CD8-positive, alpha-beta T cell (primary cell): ENCODE measurements at regions of chr4 and their contacts with region 1.

Region 1: DNA sequence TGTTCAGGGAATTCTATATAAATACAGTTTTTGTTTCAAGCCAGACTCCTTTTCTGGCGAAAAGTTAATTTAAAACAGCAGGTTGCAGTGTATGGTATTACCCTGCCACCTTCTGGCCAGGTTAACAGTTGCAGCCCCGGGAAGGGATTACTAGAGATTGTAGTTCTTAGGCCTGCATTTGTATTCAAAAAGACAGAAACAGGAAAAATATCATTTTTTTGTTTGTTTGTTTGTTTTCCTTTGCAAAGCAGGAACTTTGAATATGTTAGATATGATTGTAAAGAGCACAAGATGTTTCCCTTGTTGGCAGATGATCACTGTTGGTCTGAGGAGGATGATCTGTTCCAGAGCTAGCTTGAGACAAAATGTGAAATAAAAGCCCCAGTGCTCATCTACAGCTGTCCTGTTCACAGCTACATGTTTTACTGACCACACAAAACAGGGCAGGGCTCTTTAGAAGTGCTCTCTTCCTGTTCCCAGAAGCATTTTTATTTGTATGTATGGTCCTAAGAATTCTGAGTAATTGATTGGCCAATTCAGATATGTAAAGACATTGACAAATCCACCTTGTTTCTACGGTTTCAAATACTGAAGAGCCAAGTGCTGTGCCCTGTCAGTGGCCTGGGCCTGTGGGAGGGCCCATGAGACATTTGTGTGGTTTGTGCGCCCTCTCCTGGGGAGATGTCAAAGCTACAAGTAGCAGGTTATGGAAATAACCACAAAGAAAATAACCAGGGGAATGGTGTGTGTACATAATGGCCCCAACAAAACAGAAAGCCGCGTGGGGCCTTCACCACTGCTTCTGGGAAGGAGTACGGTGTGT is 57.9 kb downstream of the CLDN22 start:
- DNase-seq: peak; percentile 36 to 76 (median 69)
- ATAC-seq: peak; percentile 89
- H3K4me3 ChIP-seq: no peak overlapping the region
- H3K4me3 Mint-ChIP-seq: no peak overlapping the region
- H3K27ac ChIP-seq: no peak overlapping the region
- H3K27ac Mint-ChIP-seq: peak overlapping the region; percentile 7
- H3K4me1 ChIP-seq: peaks cover 4% of the 10 kb centered on the region
- H3K4me1 Mint-ChIP-seq: peaks cover 6% of the 10 kb centered on the region
- H3K27me3 ChIP-seq: no peaks in the 10 kb centered on the region
- H3K27me3 Mint-ChIP-seq: peaks cover 1% of the 10 kb centered on the region
- CTCF ChIP-seq: peak; percentile 73

Region 2: GRCh38 chr4:182478475-182478874 is 783.7 kb before region 1 on chr4:
- CTCF ChIA-PET with region 1: interaction called, 3 read pairs
- POLR2A ChIA-PET with region 1: no interaction called
- intact Hi-C with region 1: loop called (anchors 2 to 5 kb)
- DNase-seq: peak in 2 of 9 experiments; percentile 21 to 38
- ATAC-seq: no peak
- H3K4me3 ChIP-seq: no peak overlapping the region
- H3K4me3 Mint-ChIP-seq: no peak overlapping the region
- H3K27ac ChIP-seq: no peak overlapping the region
- H3K27ac Mint-ChIP-seq: no peak overlapping the region
- H3K4me1 ChIP-seq: no peaks in the 10 kb centered on the region
- H3K4me1 Mint-ChIP-seq: no peaks in the 10 kb centered on the region
- H3K27me3 ChIP-seq: no peaks in the 10 kb centered on the region
- H3K27me3 Mint-ChIP-seq: no peaks in the 10 kb centered on the region
- CTCF ChIP-seq: peak; percentile 78

Region 3: DNA sequence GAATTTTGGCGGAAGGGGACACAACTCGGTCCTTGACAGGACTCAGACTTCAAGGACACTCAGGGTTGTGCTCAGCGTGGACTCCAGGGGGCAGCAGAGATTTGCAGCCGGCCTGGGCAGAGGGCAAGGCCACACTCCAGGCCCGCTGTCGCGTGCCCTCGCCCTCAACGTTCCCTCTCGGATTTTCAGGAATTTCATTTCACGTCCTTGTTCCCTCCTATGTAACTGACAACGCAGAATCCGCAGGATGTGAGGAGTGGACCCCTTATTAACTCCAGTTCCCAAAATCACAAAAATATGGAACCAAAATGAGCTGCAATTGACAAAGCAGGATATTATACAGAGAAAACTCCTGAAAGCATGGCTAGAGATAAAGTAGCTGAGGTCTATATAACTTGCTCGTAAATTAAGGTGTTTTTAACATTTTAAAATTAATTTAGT is 323.9 kb before region 1 on chr4:
- CTCF ChIA-PET with region 1: interaction called, 24 read pairs
- POLR2A ChIA-PET with region 1: no interaction called
- intact Hi-C with region 1: loop called (anchors 1 kb)
- DNase-seq: peak; percentile 31 to 76 (median 65)
- ATAC-seq: peak; percentile 74
- H3K4me3 ChIP-seq: no peak overlapping the region
- H3K4me3 Mint-ChIP-seq: no peak overlapping the region
- H3K27ac ChIP-seq: no peak overlapping the region
- H3K27ac Mint-ChIP-seq: no peak overlapping the region
- H3K4me1 ChIP-seq: no peaks in the 10 kb centered on the region
- H3K4me1 Mint-ChIP-seq: peaks cover 7% of the 10 kb centered on the region
- H3K27me3 ChIP-seq: no peaks in the 10 kb centered on the region
- H3K27me3 Mint-ChIP-seq: peaks cover 14% of the 10 kb centered on the region
- CTCF ChIP-seq: peak; percentile 83

Region 4: DNA sequence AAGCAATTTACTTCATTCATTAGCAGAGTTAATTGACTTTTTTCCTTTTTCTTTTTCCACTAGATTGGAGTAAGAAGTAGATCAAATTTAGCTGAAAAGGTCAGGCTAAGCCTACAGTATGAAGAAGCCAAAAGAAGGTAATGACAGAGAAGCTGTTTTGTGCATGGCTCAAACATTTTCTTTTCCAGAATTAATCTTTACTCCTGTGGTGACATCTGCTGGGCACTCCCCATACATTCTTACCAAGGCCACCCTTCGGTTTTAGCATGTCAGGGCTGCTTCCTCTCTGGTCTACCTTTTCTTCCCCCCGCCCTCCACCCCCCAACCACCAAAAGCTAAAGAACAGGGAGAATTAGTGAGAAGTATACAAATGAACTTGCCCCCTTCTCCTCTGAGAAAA is 12.3 kb before region 1 on chr4:
- CTCF ChIA-PET with region 1: interaction called, 27 read pairs
- POLR2A ChIA-PET with region 1: no interaction called
- intact Hi-C with region 1: no loop called
- DNase-seq: peak in 2 of 9 experiments; percentile 17 to 32
- ATAC-seq: no peak
- H3K4me3 ChIP-seq: no peak overlapping the region
- H3K4me3 Mint-ChIP-seq: no peak overlapping the region
- H3K27ac ChIP-seq: no peak overlapping the region
- H3K27ac Mint-ChIP-seq: no peak overlapping the region
- H3K4me1 ChIP-seq: no peaks in the 10 kb centered on the region
- H3K4me1 Mint-ChIP-seq: no peaks in the 10 kb centered on the region
- H3K27me3 ChIP-seq: no peaks in the 10 kb centered on the region
- H3K27me3 Mint-ChIP-seq: peaks cover 2% of the 10 kb centered on the region
- CTCF ChIP-seq: no peak